PC-3 (cell line): ENCODE measurements at regions of chr7 and their contacts with region 1.

Region 1: GRCh38 chr7:23531794-23532489 is at the start of gene TRA2A:
- DNase-seq: peak; percentile 94
- ATAC-seq: peak; percentile 91
- H3K4me3 ChIP-seq: peak within 1 kb of the TSS; percentile 99
- H3K27ac ChIP-seq: peak within 1 kb of the TSS; percentile 81
- H3K4me1 ChIP-seq: peaks cover 18% of the 10 kb centered on the region
- H3K27me3 ChIP-seq: no peaks in the 10 kb centered on the region
- CTCF ChIP-seq: no peak
- total RNA-seq, gene TRA2A: 27.6 and 28.3 TPM in 2 replicates

Region 2: DNA sequence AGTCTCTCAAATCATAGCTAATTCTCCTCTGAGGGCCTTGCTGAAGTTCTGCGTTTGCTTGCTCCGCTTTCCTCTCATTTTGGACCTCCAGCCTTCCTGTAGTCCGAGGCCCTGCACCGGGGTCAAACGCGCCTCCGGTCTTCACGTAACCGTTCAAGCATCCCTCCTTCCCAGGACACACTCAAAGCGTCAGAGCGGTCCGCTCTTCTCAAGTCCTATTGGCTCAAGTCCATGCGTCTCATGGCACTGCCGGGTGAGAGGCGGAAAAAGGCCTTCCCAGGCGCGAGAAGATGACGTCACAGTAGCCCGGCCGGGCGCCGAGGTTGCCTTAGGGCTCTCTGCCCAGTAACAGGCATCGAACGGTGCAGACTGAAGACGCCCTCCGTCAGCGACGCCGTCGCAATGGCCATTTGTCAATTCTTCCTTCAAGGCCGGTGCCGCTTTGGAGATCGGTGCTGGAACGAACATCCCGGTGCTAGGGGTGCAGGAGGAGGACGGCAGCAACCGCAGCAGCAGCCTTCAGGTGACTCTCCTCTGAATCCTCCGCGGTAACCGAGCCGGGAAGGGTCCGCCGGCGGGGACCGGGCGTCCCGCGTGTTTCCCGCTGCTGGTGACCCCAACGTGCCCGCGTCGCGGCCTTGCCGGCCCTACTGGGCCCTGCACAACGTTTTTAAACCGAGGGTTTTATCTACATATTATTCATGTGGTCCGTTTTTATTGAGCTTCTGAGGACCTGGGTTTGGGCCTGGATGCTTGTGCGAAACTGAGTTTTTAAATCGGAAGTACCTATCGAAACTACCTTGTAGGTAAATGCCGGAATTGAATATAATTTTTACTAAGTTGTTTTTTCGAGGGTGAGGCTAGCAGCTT is 350.0 kb before region 1 on chr7 and contains the start of gene NUP42:
- CTCF ChIA-PET with region 1: no interaction called
- POLR2A ChIA-PET with region 1: no interaction called
- intact Hi-C with region 1: loop called (anchors 5 kb)
- DNase-seq: peak; percentile 99
- ATAC-seq: peak; percentile 91
- H3K4me3 ChIP-seq: peak within 1 kb of the TSS; percentile 88
- H3K27ac ChIP-seq: peak within 1 kb of the TSS; percentile 56
- H3K4me1 ChIP-seq: peaks cover 27% of the 10 kb centered on the region
- H3K27me3 ChIP-seq: no peaks in the 10 kb centered on the region
- CTCF ChIP-seq: no peak
- total RNA-seq, gene NUP42: 30.1 and 48.6 TPM in 2 replicates

Region 3: GRCh38 chr7:23334482-23335056 is 197.4 kb before region 1 on chr7:
- CTCF ChIA-PET with region 1: no interaction called
- POLR2A ChIA-PET with region 1: no interaction called
- intact Hi-C with region 1: loop called (anchors 1 kb)
- DNase-seq: peak; percentile 99
- ATAC-seq: peak; percentile 76
- H3K4me3 ChIP-seq: peak overlapping the region; percentile 26; the same call in 1 of the 2 replicates
- H3K27ac ChIP-seq: peak overlapping the region; percentile 98
- H3K4me1 ChIP-seq: peaks cover 45% of the 10 kb centered on the region
- H3K27me3 ChIP-seq: no peaks in the 10 kb centered on the region
- CTCF ChIP-seq: no peak

Region 4: DNA sequence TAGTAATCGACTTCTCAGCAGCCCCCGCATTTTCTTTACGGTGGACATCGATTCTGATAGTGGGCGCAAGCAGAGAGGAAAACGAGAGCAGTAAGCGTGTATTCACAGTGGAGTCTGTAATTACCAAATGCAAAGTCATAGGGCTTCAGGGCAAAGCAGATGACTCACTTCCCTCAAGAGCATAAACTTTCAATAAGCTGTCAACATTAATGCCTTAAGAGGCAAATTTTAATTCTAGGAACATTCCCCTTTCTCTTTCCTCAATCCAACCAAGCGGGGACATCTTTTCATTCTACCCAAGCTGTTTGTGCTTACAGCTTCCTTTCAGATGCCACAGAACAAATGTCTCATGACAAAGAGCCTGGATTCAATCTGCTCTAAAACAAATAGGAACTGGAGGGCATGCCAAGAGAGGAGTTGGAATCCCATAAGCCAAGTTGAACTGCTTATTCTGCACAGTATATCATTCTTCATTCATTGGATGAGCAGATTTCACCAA is 184.2 kb before region 1 on chr7:
- CTCF ChIA-PET with region 1: no interaction called
- POLR2A ChIA-PET with region 1: no interaction called
- intact Hi-C with region 1: loop called (anchors 5 kb)
- DNase-seq: peak; percentile 89
- ATAC-seq: peak; percentile 64
- H3K4me3 ChIP-seq: peak overlapping the region; percentile 62
- H3K27ac ChIP-seq: peak overlapping the region; percentile 98
- H3K4me1 ChIP-seq: peaks cover 75% of the 10 kb centered on the region
- H3K27me3 ChIP-seq: no peaks in the 10 kb centered on the region
- CTCF ChIP-seq: no peak

Region 5: DNA sequence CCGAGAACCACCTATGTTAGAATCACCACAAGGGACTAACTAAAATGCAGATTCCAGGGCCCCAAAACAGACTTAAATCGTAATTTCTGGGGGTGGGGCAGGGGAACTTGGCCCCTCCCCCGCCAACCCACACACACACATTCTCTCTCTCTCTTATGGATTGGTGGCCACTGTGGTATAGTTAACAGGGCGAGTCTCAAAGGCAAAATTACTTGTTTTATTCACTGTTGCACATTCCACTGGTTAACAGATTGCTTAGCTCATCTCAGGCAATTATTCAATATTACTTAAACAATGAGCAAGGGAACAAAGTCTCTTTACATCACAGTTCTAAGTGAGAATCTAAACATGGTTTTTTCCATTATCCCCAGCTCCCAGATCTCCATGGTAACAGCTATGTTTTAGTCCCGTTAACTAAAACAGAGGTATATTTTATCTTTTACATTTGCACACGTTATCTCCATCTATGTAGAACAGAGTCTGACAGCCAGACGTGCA is 100.2 kb before region 1 on chr7:
- CTCF ChIA-PET with region 1: no interaction called
- POLR2A ChIA-PET with region 1: no interaction called
- intact Hi-C with region 1: loop called (anchors 5 kb)
- DNase-seq: no peak
- ATAC-seq: no peak
- H3K4me3 ChIP-seq: no peak overlapping the region
- H3K27ac ChIP-seq: no peak overlapping the region
- H3K4me1 ChIP-seq: 0 out of 2 replicates have a peak, but pooled peaks cover 5% of the 10 kb centered on the region
- H3K27me3 ChIP-seq: no peaks in the 10 kb centered on the region
- CTCF ChIP-seq: no peak

Region 6: GRCh38 chr7:23471106-23471859 is 60.7 kb before region 1 on chr7:
- CTCF ChIA-PET with region 1: no interaction called
- POLR2A ChIA-PET with region 1: no interaction called
- intact Hi-C with region 1: loop called (anchors 2 kb)
- DNase-seq: peak; percentile 78
- ATAC-seq: peak; percentile 60
- H3K4me3 ChIP-seq: peak overlapping the region; percentile 73
- H3K27ac ChIP-seq: peak overlapping the region; percentile 79
- H3K4me1 ChIP-seq: peaks cover 36% of the 10 kb centered on the region
- H3K27me3 ChIP-seq: peaks cover 9% of the 10 kb centered on the region; the same call in 1 of the 2 replicates
- CTCF ChIP-seq: no peak